AG04449 (cell line): ENCODE measurements at regions of chr15 and their contacts with region 1.

Region 1: GRCh38 chr15:78241007-78241406 is 6.6 kb upstream of the ACSBG1 start:
- DNase-seq: no peak
- H3K4me3 ChIP-seq: no peak overlapping the region
- CTCF ChIP-seq: peak; percentile 96

Region 2: DNA sequence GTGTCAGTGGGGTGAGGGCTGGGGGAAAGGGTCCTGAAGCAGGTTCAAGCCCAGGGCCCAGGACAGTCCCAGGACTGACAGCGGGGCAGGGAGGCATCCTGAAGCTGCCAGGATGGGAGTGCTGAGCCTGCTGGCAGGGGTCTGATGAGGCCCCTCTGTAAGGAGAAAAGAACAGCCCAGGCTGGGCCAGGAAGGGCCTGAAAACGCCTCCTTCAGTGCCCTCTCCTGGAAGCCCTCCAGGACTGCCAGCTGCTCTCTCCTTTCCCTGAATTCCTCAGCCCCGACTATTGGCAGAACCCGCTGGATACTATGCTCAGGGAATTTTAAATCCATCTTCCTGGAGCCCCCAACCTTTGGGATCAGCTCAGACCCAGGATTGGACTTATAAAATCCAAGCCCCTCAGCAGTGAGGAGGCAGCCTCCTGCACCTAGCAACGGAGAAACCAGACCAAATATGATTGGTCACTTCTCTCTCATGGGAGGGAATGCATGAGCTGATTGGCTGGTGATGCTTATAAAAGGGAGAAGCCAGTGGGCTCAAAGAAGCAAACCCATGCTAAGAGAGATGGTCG is 404.8 kb before region 1 on chr15:
- CTCF ChIA-PET with region 1: no interaction called
- POLR2A ChIA-PET with region 1: no interaction called
- DNase-seq: no peak
- H3K4me3 ChIP-seq: no peak overlapping the region
- CTCF ChIP-seq: no peak

Region 3: DNA sequence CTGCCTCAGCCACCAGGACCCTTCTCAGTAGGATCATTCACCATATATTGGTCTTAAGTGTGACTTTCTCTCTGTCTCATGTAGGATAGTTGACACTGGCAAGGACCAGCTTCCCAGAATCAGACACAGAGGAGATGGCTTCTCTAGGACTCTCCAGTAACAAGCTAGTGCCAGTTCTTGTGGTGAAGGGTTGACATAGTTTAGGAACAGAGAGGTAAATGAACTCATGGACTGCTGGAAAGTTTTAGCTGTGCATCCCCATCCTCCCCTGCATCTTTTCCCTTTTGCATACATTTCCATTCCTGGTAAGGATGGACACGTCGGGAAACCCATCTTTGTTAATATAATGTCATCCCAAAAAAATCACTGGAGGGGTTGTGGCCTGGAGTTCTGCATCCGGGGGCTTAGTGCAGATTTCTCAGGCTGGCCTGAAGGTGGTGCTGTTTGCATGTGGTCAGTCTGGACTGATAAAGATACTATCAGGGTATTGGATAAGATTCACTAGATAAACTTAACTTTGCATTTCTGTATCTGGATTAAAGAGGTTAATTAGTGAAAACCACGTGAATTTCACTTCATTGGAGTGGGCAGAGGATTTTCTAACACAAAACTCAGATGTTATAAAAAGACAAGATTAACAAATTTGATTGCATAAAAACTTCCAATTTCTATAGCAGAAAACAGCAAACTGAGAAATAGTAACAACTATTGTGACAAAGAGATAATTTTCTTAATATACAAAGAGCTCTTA is 274.3 kb before region 1 on chr15:
- CTCF ChIA-PET with region 1: interaction called, 65 read pairs
- POLR2A ChIA-PET with region 1: no interaction called
- DNase-seq: no peak
- H3K4me3 ChIP-seq: no peak overlapping the region
- CTCF ChIP-seq: peak; percentile 73

Region 4: GRCh38 chr15:78131295-78132061 is 109.5 kb before region 1 on chr15 and contains the start of gene CIB2:
- CTCF ChIA-PET with region 1: interaction called, 145 read pairs
- POLR2A ChIA-PET with region 1: no interaction called
- DNase-seq: no peak
- H3K4me3 ChIP-seq: peak within 1 kb of the TSS; percentile 76
- CTCF ChIP-seq: peak; percentile 76

Region 5: GRCh38 chr15:78195735-78196201 is 45.2 kb before region 1 on chr15:
- CTCF ChIA-PET with region 1: interaction called, 22 read pairs
- POLR2A ChIA-PET with region 1: no interaction called
- DNase-seq: no peak
- H3K4me3 ChIP-seq: no peak overlapping the region
- CTCF ChIP-seq: peak; percentile 64

Region 6: DNA sequence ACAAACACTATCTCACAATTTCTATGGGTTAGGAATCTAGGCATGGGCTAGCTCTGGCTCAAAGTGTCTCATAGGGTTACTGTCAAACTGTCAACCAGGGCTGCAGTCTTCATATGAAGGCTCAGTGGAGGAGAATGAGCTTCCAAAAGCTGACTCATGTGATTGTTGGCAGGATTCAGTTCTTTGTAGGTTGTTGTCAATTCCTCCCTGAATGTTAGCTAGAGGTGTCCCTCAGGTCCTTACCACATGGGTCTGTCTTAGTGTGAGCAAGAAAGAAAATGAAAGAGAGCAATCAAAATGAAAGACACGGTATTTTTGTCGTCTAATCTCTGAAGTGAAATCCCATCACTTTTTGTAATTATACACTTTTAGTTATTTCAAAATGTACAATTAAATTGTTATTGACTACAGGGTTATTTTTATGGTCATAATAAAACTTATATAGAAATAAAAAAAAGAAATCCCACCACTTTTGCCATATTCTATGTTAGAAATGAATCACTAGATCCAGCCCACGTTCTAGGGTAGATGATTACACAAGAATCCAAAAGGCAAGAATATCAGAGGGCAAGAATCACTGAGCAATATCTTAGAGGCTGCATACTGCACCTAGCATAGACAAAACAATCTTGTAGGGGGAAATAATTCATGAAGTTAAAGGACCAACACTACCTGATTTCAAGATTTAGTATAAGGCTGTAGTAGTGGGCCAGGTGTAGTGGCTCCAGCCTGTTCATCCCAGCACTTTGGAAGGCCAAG is 15.0 kb before region 1 on chr15:
- CTCF ChIA-PET with region 1: interaction called, 24 read pairs
- POLR2A ChIA-PET with region 1: no interaction called
- DNase-seq: no peak
- H3K4me3 ChIP-seq: no peak overlapping the region
- CTCF ChIP-seq: no peak

Region 7: GRCh38 chr15:78322243-78322642 is 81.2 kb after region 1 on chr15:
- CTCF ChIA-PET with region 1: no interaction called
- POLR2A ChIA-PET with region 1: no interaction called
- DNase-seq: no peak
- H3K4me3 ChIP-seq: no peak overlapping the region
- CTCF ChIP-seq: no peak